PC-3 (cell line): ENCODE measurements at regions of chr15 and their contacts with region 1.

Region 1: GRCh38 chr15:98779463-98780071 is 131.2 kb downstream of the IGF1R start:
- DNase-seq: peak; percentile 88
- ATAC-seq: peak; percentile 98
- H3K4me3 ChIP-seq: peak overlapping the region; percentile 5; the same call in 1 of the 2 replicates
- H3K27ac ChIP-seq: no peak overlapping the region
- H3K4me1 ChIP-seq: peaks cover 4% of the 10 kb centered on the region; the same call in 1 of the 2 replicates
- H3K27me3 ChIP-seq: no peaks in the 10 kb centered on the region
- CTCF ChIP-seq: peak; percentile 93

Region 2: GRCh38 chr15:98647774-98648653 is 131.6 kb before region 1 on chr15 and contains the start of gene IGF1R:
- CTCF ChIA-PET with region 1: no interaction called
- POLR2A ChIA-PET with region 1: no interaction called
- intact Hi-C with region 1: loop called (anchors 5 kb)
- DNase-seq: peak; percentile 93
- ATAC-seq: peak; percentile 36
- H3K4me3 ChIP-seq: peak within 1 kb of the TSS; percentile 84
- H3K27ac ChIP-seq: no peak within 1 kb of the TSS
- H3K4me1 ChIP-seq: no peaks in the 10 kb centered on the region
- H3K27me3 ChIP-seq: peaks cover 75% of the 10 kb centered on the region
- CTCF ChIP-seq: no peak
- total RNA-seq, gene IGF1R: 3.8 and 15.8 TPM in 2 replicates

Region 3: DNA sequence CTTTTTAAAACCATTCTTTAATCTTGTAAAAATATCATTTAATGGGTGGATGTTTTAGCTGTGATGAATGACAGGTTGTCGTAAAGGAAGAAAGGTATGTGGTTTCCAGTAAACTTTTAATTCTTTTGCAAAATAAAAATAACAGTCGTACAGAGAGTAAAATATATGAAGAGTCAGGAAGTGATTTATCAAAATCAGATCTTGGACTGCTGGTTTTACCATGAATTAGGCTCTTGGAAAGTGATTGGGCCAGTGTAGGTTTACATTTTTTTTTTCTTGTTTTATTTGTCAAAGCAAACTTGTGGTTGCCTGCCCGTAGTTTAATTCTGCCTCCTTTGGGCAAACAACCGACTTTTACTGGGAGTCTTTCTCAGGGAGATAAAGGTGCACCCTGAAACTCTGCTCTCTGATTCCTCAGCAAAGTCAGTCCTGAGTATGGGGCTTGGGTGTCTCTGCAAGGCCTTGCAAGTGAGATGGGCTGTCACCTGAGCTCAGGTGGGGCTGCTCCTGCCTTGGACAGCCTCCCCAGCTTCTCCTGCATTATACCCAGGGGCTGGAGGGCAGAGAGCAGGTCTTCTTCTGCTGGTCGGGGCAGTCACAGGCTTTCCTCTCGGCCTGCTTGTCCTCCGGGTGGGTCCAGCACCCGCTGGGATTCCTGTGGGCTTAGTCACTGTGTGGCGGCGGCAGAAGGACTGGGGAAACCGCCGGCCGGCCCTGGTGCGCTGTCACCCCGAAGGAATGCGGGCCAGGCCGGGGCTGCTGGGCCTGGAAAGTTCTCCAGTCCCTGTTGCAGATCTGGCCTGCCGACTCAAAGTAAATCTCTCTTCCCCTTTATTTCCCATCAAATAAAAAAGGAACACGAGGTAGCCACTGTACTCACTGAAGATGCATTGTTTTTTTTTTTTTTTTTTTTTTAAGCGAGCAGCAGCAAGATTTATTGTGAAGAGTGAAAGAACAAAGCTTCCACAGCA is 52.2 kb before region 1 on chr15:
- CTCF ChIA-PET with region 1: interaction called, 6 read pairs
- POLR2A ChIA-PET with region 1: no interaction called
- intact Hi-C with region 1: loop called (anchors 1 kb)
- DNase-seq: peak; percentile 95
- ATAC-seq: peak; percentile 98
- H3K4me3 ChIP-seq: peak overlapping the region; percentile 39
- H3K27ac ChIP-seq: peak overlapping the region; percentile 89
- H3K4me1 ChIP-seq: peaks cover 35% of the 10 kb centered on the region
- H3K27me3 ChIP-seq: no peaks in the 10 kb centered on the region
- CTCF ChIP-seq: no peak

Region 4: DNA sequence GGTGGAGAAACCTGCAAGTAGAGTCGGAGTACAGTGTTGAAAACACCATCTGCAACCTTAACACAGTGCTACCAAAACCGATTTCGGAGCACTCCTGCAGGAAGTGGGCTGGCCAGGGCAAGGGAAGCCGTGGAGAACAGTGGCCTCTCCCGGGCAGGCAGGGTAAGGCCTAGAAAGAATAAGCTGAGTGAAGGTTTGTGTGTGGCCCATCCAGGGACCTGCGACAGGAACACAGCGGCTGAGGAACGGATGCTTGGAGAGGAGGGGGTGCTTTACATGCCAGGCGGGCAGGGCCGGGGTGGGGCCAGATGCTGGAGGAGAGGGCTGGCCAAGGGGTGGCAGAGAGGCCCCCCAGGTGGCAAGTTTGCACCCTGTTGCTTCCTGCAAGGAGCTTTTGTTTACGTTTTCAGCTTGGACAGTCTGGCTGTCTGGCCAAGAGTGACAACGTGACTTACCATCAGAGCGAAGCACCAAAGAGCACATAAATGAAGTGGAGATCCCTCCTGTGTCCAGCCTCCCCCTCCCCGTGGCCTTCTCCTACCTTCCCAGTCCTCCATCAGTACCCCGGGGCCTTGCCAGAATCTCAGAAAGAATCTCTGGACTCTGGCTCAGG is 71.5 kb after region 1 on chr15:
- CTCF ChIA-PET with region 1: interaction called, 10 read pairs
- POLR2A ChIA-PET with region 1: no interaction called
- intact Hi-C with region 1: no loop called
- DNase-seq: peak; percentile 76
- ATAC-seq: peak; percentile 57
- H3K4me3 ChIP-seq: peak overlapping the region; percentile 84
- H3K27ac ChIP-seq: no peak overlapping the region
- H3K4me1 ChIP-seq: peaks cover 48% of the 10 kb centered on the region
- H3K27me3 ChIP-seq: no peaks in the 10 kb centered on the region
- CTCF ChIP-seq: peak; percentile 88

Region 5: DNA sequence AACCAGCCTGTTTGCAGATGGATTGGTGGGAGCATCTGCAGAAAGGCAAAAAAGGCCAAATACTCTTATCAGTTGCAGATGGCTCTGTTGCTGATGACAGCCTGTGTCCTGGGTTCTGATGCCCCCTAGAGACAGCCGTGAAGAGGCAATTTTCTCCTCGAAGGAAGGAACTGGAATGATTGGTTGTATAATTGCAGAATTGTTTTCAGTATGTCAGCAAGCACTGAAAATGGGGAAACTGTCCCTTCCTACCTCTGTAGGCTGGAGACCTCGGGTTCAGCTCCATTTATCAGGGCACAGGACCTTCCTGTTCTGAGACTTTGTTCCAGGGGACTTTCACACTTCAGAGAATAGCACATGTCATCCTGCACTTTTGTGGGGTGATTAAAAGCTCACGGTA is 125.0 kb after region 1 on chr15:
- CTCF ChIA-PET with region 1: no interaction called
- POLR2A ChIA-PET with region 1: no interaction called
- intact Hi-C with region 1: loop called (anchors 1 kb)
- DNase-seq: peak; percentile 60
- ATAC-seq: peak; percentile 50
- H3K4me3 ChIP-seq: no peak overlapping the region
- H3K27ac ChIP-seq: peak overlapping the region; percentile 81; the same call in 1 of the 2 replicates
- H3K4me1 ChIP-seq: peaks cover 53% of the 10 kb centered on the region
- H3K27me3 ChIP-seq: no peaks in the 10 kb centered on the region
- CTCF ChIP-seq: peak; percentile 84

Region 6: GRCh38 chr15:99076552-99077308 is 297.2 kb after region 1 on chr15:
- CTCF ChIA-PET with region 1: no interaction called
- POLR2A ChIA-PET with region 1: no interaction called
- intact Hi-C with region 1: loop called (anchors 5 kb)
- DNase-seq: peak; percentile 83
- ATAC-seq: peak; percentile 90
- H3K4me3 ChIP-seq: peak overlapping the region; percentile 62
- H3K27ac ChIP-seq: no peak overlapping the region
- H3K4me1 ChIP-seq: no peaks in the 10 kb centered on the region
- H3K27me3 ChIP-seq: no peaks in the 10 kb centered on the region
- CTCF ChIP-seq: peak; percentile 89